Kidney (tissue), 22 donors: ENCODE measurements at regions of chr1 and their contacts with region 1.

Region 1: GRCh38 chr1:99180343-99180808 is 83.9 kb upstream of the PLPPR4 start:
- DNase-seq: peak in 4 of 5 donors; percentile 81 to 94 (median 88)
- H3K4me3 ChIP-seq: peak overlapping the region in 2 of 3 donors; percentile 15 to 43
- H3K27ac ChIP-seq: no peak overlapping the region
- H3K4me1 ChIP-seq: no peaks in the 10 kb centered on the region
- H3K27me3 ChIP-seq: no peaks in the 10 kb centered on the region
- CTCF ChIP-seq: peak; percentile 89

Region 2: GRCh38 chr1:99315305-99315704 is 134.9 kb after region 1 on chr1:
- intact Hi-C with region 1: no loop called
- DNase-seq: no peak
- H3K4me3 ChIP-seq: no peak overlapping the region
- H3K27ac ChIP-seq: no peak overlapping the region
- H3K4me1 ChIP-seq: no peaks in the 10 kb centered on the region
- H3K27me3 ChIP-seq: no peaks in the 10 kb centered on the region
- CTCF ChIP-seq: no peak

Region 3: DNA sequence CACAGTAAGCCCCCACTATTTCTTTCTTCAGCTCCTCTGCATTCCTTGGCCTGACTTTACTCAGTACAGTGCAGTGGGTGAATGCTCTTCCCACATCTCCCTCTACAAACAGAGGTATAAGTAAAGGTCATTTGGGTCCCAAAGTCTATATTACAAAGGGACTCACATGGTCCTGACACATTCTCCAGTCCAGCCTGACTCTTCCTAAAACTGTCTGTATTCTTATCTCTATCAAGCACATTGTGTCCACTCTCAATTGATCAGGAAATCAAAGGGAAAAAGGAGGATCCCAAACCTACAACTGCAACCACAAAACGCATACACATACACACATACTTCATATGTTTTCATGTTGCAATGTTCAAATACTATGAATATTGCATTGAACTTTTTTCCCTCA is 536.6 kb after region 1 on chr1:
- intact Hi-C with region 1: loop called (anchors 5 kb)
- DNase-seq: no peak
- H3K4me3 ChIP-seq: no peak overlapping the region
- H3K27ac ChIP-seq: no peak overlapping the region
- H3K4me1 ChIP-seq: no peaks in the 10 kb centered on the region
- H3K27me3 ChIP-seq: no peaks in the 10 kb centered on the region
- CTCF ChIP-seq: no peak